ENCODE measurements at regions of chr18 and their contacts with region 1.

Region 1: DNA sequence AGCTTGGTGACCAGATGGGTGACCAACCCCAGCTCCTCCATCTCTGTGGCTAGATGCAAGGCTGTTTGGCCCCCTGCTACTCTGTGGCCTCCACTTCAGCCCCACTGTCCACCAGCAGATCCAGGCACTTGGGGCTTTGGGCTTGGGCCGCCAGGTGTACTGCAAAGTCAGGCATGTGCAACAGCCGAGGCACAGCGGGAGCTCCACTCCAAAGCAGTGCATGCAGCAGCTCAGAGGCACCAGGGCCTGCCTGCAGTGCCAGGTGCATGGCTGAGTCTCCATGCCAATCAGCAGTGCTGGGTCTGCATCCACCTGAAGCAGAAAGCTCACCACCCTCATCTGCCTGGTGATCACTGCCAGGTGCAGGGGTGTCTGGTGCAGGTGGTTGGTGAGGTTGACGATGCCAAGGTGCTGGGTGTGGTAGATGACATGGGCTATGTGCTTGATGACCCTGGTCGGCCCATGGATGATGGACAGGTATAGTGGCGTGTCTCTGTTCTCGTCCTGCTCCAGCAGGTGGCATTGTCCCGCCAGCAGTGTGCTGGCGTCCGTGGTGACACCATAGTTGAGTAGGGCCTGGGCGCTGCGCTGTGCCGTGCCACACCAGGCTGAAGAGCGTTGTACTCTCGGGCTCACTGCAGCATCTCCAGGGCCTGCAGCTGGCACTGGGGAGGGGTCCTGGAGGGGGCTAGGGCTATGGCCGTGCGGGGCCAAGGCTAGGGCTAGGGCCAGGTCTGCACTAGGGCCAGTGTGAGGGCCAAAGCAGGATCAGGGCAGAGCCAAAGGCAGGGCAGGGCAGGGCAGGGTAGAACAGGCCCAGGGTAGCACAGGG is 1.0 kb upstream of the ANKRD62 start:
- DNase-seq: peak; percentile 13
- ATAC-seq: peak; percentile 97
- H3K4me3 ChIP-seq: no peak overlapping the region
- H3K27ac ChIP-seq: no peak overlapping the region
- H3K4me1 ChIP-seq: no peaks in the 10 kb centered on the region
- H3K27me3 ChIP-seq: no peaks in the 10 kb centered on the region
- CTCF ChIP-seq: peak; percentile 52 to 62 (median 60); a peak in 5 of 6 replicates
- POLR2A ChIP-seq: no peak
- RAD21 ChIP-seq: peak; percentile 78

Region 2: GRCh38 chr18:12236934-12237832 is 144.6 kb after region 1 on chr18:
- CTCF ChIA-PET with region 1: interaction called, 4 read pairs
- POLR2A ChIA-PET with region 1: no interaction called
- RAD21 ChIA-PET with region 1: no interaction called
- intact Hi-C with region 1: loop called (anchors 2 kb)
- DNase-seq: peak; percentile 19
- ATAC-seq: peak; percentile 100
- H3K4me3 ChIP-seq: no peak overlapping the region
- H3K27ac ChIP-seq: no peak overlapping the region
- H3K4me1 ChIP-seq: peaks cover 0 to 9% of the 10 kb centered on the region in 2 experiments; a peak in 1 of 4 replicates
- H3K27me3 ChIP-seq: peaks cover 3% of the 10 kb centered on the region; the same call in 1 of the 2 replicates
- CTCF ChIP-seq: peak; percentile 65 to 94 (median 92)
- POLR2A ChIP-seq: no peak
- RAD21 ChIP-seq: peak; percentile 71

Measured in HCT116 (cell line).